Activated CD8-positive, alpha-beta memory T cell treated with anti-CD3 and anti-CD28 coated beads, Interleukin-2, amount 10 ng/mL, durations not matched to agents 7 days and 5 days (primary cell): ENCODE measurements at regions of chr14 and their contacts with region 1.

Region 1: DNA sequence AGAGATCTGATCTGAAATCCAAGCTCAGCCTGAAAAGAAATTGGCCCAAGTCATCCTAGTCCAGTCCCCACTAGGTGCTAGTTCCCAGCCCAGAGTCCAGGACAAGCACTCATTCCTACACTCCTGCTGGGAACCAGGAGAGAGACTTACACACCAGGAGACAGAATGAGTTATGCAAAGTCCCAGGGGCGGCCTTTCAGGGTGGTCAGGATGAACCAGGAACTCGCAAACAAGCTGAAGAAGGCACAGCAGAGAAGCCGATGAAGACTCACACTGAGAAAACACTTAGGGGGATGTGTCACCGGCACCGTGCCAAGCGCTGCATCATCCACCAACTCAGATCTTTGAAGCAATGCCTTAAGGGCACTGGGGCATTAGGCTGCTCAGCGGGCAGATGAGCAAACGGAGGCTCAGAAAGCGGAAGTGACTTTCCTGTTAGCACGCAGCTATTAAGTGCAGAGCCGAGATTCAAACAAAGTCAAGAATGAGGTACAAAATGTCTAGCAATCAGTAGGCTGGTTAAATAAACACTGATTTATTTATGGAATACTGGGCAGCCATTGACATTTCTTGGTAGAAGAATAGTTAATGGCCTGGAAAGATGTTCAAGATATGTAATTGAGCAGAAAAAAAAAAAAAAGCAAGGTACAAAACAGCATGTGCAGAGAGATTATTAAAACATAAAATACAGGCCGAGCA is 78.7 kb downstream of the LRRC74A start:
- DNase-seq: peak; percentile 78
- ATAC-seq: peak; percentile 75
- H3K4me3 Mint-ChIP-seq: no peak overlapping the region
- H3K27ac Mint-ChIP-seq: no peak overlapping the region
- H3K4me1 Mint-ChIP-seq: peaks cover 29% of the 10 kb centered on the region
- H3K27me3 Mint-ChIP-seq: peaks cover 7% of the 10 kb centered on the region

Region 2: DNA sequence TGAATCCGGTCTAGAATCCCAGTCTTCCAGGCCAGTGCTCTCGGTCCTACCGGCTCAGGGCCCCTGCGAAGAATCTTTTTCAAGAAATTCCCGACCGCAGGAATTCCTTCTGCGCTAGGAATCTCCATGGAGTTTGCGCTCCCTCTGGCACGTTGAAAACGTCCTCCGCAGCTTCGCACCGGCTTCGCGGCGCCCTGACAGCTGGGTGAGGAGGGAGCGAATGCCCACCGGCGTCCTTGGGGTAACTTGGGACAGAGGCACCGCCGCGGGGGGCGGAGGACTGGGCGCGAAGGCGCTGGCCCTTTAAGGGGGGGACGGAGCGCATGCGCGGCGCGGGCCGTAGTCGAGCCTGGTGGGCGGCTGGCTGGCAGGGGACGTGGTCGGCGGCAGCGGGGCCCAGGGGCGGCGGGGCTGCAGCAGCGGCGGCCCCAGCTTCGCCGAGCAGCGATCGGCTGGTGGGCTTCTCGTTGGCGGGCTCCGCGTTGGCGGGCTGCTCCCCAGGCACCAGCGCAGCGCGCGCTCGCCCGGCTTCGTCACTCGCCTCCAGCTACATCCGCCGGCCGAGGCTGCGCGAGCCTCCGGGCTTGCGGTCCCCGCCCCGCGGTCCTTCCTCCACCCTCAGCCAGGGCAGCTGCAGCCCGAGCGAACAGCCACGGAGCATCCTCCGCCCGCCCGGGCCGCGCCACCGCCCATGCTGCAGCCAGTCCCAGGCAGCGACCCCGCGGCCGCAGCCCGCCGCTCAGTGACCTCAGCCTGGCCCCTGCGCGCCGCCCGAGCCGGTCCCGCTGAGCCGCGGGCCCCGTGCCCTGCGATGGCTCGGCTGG is 143.5 kb before region 1 on chr14 and contains the start of gene VASH1:
- CTCF ChIA-PET with region 1: no interaction called
- DNase-seq: peak; percentile 73
- ATAC-seq: peak; percentile 92
- H3K4me3 Mint-ChIP-seq: peak within 1 kb of the TSS; percentile 66
- H3K27ac Mint-ChIP-seq: no peak within 1 kb of the TSS
- H3K4me1 Mint-ChIP-seq: peaks cover 7% of the 10 kb centered on the region
- H3K27me3 Mint-ChIP-seq: peaks cover 53% of the 10 kb centered on the region
- total RNA-seq, gene VASH1: 3.3 to 8.1 TPM

Region 3: DNA sequence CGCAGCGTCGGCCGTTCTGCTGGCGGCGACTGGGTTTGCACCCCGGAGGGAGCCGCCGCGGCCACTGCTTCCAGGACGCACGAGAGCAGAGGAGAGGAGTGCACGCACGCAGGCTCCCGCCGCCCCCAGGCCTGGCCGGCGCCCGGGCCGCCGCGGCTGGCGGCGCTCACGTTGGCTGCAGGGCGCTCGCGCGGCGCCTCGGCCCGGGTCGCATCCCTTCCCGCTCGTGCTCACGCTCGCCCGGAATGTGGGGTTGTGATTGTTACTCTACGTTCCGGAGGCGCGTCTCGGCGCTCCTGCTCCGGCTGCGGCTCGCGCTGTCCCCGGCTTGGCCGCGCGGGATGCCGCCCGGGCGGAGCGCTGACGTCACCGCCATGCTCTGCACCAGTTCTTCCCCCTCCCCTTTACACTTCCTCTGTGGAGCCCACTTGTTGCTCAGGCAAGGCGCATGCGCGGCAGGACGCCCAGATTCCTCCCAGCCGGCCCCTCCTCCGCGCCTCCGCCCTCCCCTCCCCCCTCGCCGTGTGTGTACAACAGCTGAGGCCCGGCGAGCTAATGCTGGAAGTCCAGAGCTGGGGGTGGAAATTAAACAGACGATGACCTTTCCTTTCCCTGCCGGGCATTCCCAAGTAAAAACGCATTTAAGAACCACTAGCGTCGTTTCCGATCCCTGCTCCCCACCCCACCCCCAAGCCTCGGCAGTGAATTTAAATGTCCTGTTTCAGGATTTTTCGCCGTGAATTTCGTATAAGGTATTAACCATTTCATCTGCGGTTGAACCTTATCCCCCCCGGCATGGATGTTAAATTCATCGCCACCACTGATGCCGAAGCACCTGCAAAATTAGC is 123.7 kb after region 1 on chr14 and contains the start of gene IRF2BPL:
- CTCF ChIA-PET with region 1: interaction called, 81 read pairs
- DNase-seq: peak; percentile 97
- ATAC-seq: peak; percentile 78
- H3K4me3 Mint-ChIP-seq: peak within 1 kb of the TSS; percentile 89
- H3K27ac Mint-ChIP-seq: peak within 1 kb of the TSS; percentile 93
- H3K4me1 Mint-ChIP-seq: peaks cover 57% of the 10 kb centered on the region
- H3K27me3 Mint-ChIP-seq: no peaks in the 10 kb centered on the region
- total RNA-seq, gene IRF2BPL: 19.7 to 24.9 TPM